Dorsolateral prefrontal cortex (tissue), 120 donors: ENCODE measurements at regions of chr11 and their contacts with region 1.

Region 1: DNA sequence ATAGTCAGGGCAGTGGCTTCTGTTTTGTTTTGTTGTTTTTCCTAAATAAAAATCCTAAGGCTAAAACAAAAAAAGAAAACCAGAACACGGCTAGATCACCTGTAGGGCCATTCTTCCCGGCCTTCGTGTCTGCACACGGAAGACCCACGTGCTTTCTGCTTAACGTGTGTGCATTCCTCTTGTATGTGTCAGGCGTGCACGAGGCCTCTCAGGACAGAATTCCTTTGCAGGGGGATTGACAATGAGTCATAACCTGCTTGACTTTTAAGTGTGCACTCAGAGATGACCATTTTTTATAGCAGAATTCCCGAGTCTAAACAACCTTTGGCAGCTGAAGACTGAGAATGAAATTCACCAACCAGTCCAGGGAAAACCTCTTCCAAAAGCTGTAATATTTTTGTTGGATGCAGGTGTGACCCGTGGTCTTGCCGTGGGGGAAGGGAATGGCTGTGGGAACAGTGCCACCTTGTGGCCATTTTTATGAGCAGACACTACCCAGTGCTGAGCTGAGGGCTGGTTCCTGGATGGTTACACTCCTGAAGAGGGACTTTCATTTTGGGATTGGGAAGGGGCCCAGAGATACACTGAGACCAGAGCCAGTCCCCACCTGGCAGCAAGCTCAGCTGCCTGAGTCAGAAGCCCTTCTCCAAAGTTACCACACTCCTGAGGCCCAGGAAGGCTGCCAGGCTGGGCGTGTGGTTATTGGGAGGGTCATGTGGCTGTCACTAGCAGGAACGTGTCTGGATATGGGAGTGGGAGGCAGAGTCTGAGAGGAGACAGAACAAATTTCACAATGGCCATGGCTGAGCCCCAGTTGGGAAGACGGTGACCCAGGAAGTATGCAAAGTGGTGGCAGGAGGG is 35.8 kb upstream of the DKK3 start:
- DNase-seq: peak; percentile 58 to 87 (median 80)
- H3K4me3 ChIP-seq: peak overlapping the region in 27 of 59 donors; percentile 2 to 49 (median 20)
- H3K27ac ChIP-seq: peak overlapping the region in 33 of 59 donors; percentile 2 to 76 (median 46)
- H3K27me3 ChIP-seq: no peaks in the 10 kb centered on the region
- CTCF ChIP-seq: peak; percentile 91 to 100 (median 96)

Region 2: GRCh38 chr11:11798586-11799438 is 245.4 kb before region 1 on chr11:
- intact Hi-C with region 1: loop called (anchors 2 kb)
- DNase-seq: peak; percentile 78 to 95 (median 87)
- H3K4me3 ChIP-seq: peak overlapping the region in 7 of 59 donors; percentile 1 to 29 (median 16)
- H3K27ac ChIP-seq: peak overlapping the region in 4 of 59 donors; percentile 1 to 49 (median 26)
- H3K27me3 ChIP-seq: no peaks in the 10 kb centered on the region
- CTCF ChIP-seq: peak in 55 of 56 donors; percentile 55 to 99 (median 95)

Region 3: DNA sequence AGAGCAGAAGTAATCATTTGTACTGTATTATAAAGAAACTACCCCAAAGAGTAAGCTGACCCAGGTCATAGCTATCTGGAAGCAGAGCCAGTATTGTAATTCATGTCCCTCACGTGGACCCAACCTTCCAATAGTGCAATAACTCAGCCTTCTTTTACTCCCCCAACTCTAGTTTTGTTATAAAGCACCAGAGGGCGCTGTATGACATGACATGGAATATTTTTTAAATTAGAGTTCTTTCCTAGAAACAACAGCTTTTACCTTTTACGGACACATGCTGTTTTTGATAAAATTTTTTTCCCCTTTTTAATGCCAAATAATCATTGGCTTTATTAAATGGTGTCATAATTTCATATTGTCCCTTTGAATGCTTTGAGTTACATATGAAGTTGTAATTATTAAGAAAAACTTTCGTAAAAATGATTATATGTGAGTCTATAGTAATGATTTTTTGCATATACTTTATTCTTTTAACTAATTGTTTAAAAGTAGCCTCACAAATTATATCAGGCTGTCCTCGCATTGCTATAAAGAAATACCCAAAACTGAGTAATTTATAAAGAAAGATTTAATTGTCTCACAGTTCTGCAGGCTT is 112.6 kb before region 1 on chr11:
- intact Hi-C with region 1: loop called (anchors 1 to 2 kb)
- DNase-seq: no peak
- H3K4me3 ChIP-seq: no peak overlapping the region
- H3K27ac ChIP-seq: peak overlapping the region in 2 of 59 donors; percentile 2 to 27
- H3K27me3 ChIP-seq: no peaks in the 10 kb centered on the region
- CTCF ChIP-seq: peak; percentile 43 to 92 (median 72)

Region 4: DNA sequence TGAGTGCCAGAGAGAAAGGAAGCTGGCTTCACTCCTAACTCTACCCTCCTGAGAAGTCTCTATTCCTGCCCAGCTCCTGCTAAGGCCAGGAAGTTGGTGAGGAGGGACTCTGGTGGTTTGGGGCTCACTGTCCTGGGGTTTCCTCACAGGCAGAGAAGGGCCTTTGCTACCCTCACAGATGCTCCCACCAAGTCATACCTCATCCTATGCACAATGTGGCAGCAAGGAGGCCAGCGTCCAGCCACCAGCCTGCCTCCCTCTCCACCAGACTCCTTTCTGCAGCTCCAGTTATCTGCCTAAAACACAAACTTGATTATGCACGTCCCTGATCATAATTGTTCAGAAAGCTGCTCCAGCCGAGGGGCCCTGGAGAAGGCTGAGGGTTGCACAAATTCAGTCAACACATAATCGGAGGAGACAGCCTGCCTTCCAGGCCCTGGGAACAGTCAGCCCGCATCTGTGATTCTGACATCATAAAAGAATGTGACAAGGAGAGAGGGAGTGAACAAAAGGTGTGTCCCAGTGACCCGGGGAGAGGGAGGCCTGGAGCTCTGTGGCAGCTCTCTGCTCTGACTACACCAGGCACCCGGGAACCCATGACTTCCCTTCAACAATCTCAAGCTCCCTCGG is 64.6 kb before region 1 on chr11:
- intact Hi-C with region 1: loop called in 1 of 2 experiments (anchors 5 kb)
- DNase-seq: peak in 1 of 10 donors; percentile 29
- H3K4me3 ChIP-seq: no peak overlapping the region
- H3K27ac ChIP-seq: peak overlapping the region in 57 of 59 donors; percentile 9 to 93 (median 76)
- H3K27me3 ChIP-seq: no peaks in the 10 kb centered on the region
- CTCF ChIP-seq: no peak

Region 5: GRCh38 chr11:12281571-12282478 is 237.6 kb after region 1 on chr11:
- intact Hi-C with region 1: loop called (anchors 1 to 2 kb)
- DNase-seq: peak; percentile 83 to 96 (median 92)
- H3K4me3 ChIP-seq: no peak overlapping the region
- H3K27ac ChIP-seq: no peak overlapping the region
- H3K27me3 ChIP-seq: peaks cover 0 to 9% (median 0%) of the 10 kb centered on the region in 45 donors
- CTCF ChIP-seq: peak; percentile 95 to 100 (median 99)